Right ventricle myocardium inferior (tissue), 1 donor: ENCODE measurements at regions of chr19 and their contacts with region 1.

Region 1: DNA sequence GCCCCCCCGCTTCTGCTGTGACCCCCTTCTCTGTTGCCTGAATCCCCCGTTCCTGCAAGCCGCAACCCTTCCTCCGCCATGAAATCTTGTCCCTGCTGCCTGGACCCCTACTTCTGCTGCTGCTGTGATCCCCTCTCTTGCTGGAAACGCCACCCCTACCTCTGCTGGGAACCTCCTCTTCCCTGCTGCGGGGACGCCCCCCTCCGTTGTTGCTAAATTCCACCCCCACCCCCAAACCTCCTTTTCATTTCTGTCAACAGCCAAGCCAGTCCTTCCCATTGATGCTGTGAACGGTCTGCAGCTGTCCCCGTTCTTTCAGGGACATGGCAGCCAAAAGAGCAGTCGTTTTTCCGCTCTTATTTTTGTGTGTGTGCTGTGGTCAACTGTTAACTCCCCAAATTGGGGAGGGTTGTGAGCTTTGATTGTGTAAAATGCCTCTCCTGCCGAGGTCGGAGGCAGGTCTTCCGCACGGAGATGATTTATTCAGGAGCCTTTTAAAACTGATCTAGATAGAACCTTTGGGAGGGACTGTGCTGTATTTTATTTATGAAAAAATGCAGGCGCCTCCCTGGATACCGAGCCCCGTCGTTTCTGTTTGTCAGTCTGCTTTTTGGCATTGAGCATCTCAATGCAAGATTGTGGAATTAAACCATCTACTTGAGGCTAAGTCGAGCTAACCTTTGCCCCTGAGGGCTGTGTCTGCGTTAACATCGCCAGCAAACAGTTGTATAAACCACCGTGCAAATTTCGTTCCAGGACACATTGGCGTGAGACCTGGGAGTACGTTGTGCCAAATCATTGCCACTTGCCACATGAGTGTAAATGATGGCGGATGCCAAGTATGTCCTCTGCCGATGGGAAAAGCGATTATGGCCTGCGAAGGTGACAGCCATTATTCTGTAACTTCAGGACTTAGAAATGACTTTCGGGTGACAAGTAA is 27.9 kb upstream of the NDUFS7 start:
- DNase-seq: peak; percentile 1
- ATAC-seq: no peak

Region 2: GRCh38 chr19:1168877-1169791 is 186.7 kb before region 1 on chr19:
- intact Hi-C with region 1: no loop called
- DNase-seq: peak; percentile 68
- ATAC-seq: no peak

Region 3: GRCh38 chr19:1315470-1316231 is 40.2 kb before region 1 on chr19:
- intact Hi-C with region 1: loop called (anchors 5 kb)
- DNase-seq: peak; percentile 79
- ATAC-seq: peak; percentile 86

Region 4: DNA sequence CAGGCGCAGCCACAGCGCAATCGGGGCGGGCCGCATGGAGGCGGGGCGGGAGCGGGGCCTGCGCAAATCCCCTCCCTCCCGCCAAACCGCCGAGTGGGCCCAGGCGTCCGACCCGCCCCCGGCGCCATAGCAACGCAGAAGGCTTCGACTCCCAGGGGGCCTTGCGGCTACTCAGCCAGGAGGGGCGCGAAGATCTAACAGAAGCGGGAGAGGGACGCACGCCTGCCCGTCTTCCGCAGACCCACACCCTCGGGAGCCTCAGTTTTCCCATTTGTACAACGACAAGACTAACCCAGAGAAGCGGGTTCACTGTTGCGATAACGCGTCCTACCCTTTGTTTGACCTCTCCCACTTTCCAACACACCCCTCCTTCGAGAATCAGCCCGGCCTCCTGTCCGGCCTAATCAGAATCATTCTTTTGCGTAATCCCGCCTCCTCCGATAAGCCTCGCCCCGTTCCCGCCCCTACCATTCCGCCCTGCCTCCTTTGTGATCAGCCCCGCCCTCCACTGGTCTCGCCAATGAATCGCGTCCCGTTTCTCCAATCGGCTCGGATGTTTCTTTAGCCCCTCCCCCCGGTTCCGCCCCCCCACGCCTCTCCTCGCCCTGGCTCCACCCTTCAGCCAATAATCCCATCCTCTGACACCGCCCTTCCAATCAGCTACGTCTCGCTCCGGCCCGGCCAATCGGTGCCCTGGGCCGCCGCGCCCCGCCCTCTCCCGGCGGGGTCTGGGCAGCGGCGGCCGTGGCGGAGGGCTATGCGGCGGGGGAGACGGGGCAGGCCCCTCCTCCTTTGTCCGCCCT is 134.7 kb after region 1 on chr19 and contains the start of gene PCSK4:
- intact Hi-C with region 1: no loop called
- DNase-seq: peak; percentile 97
- ATAC-seq: peak; percentile 94
- total RNA-seq, gene PCSK4: 0.89 TPM